K562 (cell line): ENCODE measurements at regions of chr15 and their contacts with region 1.

Region 1: DNA sequence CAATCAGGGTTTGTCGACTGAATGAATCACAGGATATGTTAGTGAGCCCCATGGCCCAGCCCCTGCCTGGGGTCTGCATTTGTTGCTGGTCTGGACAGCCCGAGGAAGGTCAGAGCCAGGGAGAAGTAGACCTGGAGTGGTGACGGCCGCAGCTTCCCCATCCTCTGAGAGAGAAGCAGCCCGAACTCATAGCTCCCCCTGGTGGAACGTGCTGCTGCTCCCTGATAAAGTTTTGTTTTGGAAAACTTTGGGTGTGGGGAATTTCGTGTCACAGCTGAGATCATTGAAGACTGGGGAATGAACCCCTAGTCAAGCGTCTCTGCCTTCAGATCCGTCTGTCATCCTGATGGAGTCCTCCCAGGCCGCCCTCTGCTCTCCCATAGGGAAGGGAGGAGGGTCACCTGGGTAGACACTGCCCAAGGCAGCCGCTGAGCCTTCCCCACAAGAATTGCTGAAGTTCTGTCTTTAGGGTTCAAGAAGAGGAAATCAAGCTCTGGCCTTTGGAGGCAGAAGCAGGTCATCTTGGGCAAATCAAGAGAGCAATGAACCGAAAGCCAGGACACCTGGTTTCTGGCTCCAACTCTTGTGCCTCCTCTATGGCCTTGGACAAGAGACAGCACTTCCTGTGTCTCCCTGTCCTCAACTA is 60.5 kb downstream of the GLDN start:
- DNase-seq: peak; percentile 54 to 68 (median 60)
- ATAC-seq: peak; percentile 84
- H3K4me3 ChIP-seq: no peak overlapping the region
- H3K27ac ChIP-seq: no peak overlapping the region
- H3K4me1 ChIP-seq: no peaks in the 10 kb centered on the region
- H3K27me3 ChIP-seq: peaks cover 39 to 40% of the 10 kb centered on the region in 2 experiments
- CTCF ChIP-seq: peak; percentile 73 to 87 (median 76)
- EP300 ChIP-seq: no peak
- POLR2A ChIP-seq: no peak
- RAD21 ChIP-seq: peak; percentile 47 to 70

Region 2: DNA sequence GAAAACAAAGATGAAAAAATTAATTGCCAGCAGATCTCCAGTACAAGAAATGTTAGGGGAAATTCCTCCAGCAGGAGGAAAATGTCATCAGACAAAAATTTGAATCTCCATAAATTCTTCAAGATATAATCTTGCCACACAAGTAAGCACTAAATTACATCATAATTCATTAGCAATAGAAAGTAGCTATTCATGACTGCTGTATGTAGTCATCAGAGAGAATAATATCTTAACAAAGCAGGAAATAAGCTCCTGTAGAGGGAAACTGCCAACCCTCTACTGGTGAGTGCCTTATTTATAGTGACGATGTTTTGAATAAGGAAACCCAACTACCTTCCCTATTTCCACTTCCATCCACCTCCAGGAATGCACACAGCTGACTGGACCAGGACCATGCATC is 1235.8 kb before region 1 on chr15:
- CTCF ChIA-PET with region 1: no interaction called
- POLR2A ChIA-PET with region 1: no interaction called
- in situ Hi-C with region 1: no loop called
- intact Hi-C with region 1: no loop called
- DNase-seq: no peak
- ATAC-seq: no peak
- H3K4me3 ChIP-seq: no peak overlapping the region
- H3K27ac ChIP-seq: no peak overlapping the region
- H3K4me1 ChIP-seq: peaks cover 0 to 4% of the 10 kb centered on the region in 2 experiments; a peak in 2 of 5 replicates
- H3K27me3 ChIP-seq: no peaks in the 10 kb centered on the region
- CTCF ChIP-seq: no peak
- EP300 ChIP-seq: no peak
- POLR2A ChIP-seq: no peak
- RAD21 ChIP-seq: no peak

Region 3: GRCh38 chr15:50697109-50697797 is 704.7 kb before region 1 on chr15:
- CTCF ChIA-PET with region 1: no interaction called
- POLR2A ChIA-PET with region 1: no interaction called
- in situ Hi-C with region 1: no loop called
- intact Hi-C with region 1: no loop called
- DNase-seq: no peak
- ATAC-seq: no peak
- H3K4me3 ChIP-seq: no peak overlapping the region
- H3K27ac ChIP-seq: no peak overlapping the region
- H3K4me1 ChIP-seq: no peaks in the 10 kb centered on the region
- H3K27me3 ChIP-seq: no peaks in the 10 kb centered on the region
- CTCF ChIP-seq: no peak
- EP300 ChIP-seq: no peak
- POLR2A ChIP-seq: no peak
- RAD21 ChIP-seq: no peak

Region 4: GRCh38 chr15:51227940-51228783 is 173.8 kb before region 1 on chr15:
- CTCF ChIA-PET with region 1: interaction called, 12 read pairs
- POLR2A ChIA-PET with region 1: no interaction called
- in situ Hi-C with region 1: no loop called
- intact Hi-C with region 1: no loop called
- DNase-seq: peak; percentile 74 to 88 (median 82)
- ATAC-seq: peak; percentile 95
- H3K4me3 ChIP-seq: no peak overlapping the region
- H3K27ac ChIP-seq: peak overlapping the region; percentile 82
- H3K4me1 ChIP-seq: peaks cover 11 to 31% of the 10 kb centered on the region in 2 experiments
- H3K27me3 ChIP-seq: peaks cover 0 to 3% of the 10 kb centered on the region in 2 experiments; a peak in 3 of 5 replicates
- CTCF ChIP-seq: no peak
- EP300 ChIP-seq: peak; percentile 67; the same call in 1 of the 2 replicates
- POLR2A ChIP-seq: no peak
- RAD21 ChIP-seq: no peak

Region 5: GRCh38 chr15:51281368-51281967 is 120.5 kb before region 1 on chr15:
- CTCF ChIA-PET with region 1: interaction called, 6 read pairs
- POLR2A ChIA-PET with region 1: no interaction called
- in situ Hi-C with region 1: no loop called
- intact Hi-C with region 1: loop called (anchors 2 kb)
- DNase-seq: peak; percentile 29 to 67 (median 48)
- ATAC-seq: peak; percentile 98
- H3K4me3 ChIP-seq: no peak overlapping the region
- H3K27ac ChIP-seq: no peak overlapping the region
- H3K4me1 ChIP-seq: no peaks in the 10 kb centered on the region
- H3K27me3 ChIP-seq: peaks cover 13 to 31% of the 10 kb centered on the region in 2 experiments
- CTCF ChIP-seq: peak; percentile 69 to 76 (median 73)
- EP300 ChIP-seq: no peak
- POLR2A ChIP-seq: no peak
- RAD21 ChIP-seq: peak; percentile 70 to 78

Region 6: GRCh38 chr15:51414257-51415044 is 12.5 kb after region 1 on chr15:
- CTCF ChIA-PET with region 1: no interaction called
- POLR2A ChIA-PET with region 1: no interaction called
- in situ Hi-C with region 1: no loop called
- intact Hi-C with region 1: no loop called
- DNase-seq: no peak
- ATAC-seq: no peak
- H3K4me3 ChIP-seq: no peak overlapping the region
- H3K27ac ChIP-seq: no peak overlapping the region
- H3K4me1 ChIP-seq: no peaks in the 10 kb centered on the region
- H3K27me3 ChIP-seq: peaks cover 6 to 8% of the 10 kb centered on the region in 2 experiments; a peak in 3 of 5 replicates
- CTCF ChIP-seq: no peak
- EP300 ChIP-seq: no peak
- POLR2A ChIP-seq: no peak
- RAD21 ChIP-seq: no peak

Region 7: DNA sequence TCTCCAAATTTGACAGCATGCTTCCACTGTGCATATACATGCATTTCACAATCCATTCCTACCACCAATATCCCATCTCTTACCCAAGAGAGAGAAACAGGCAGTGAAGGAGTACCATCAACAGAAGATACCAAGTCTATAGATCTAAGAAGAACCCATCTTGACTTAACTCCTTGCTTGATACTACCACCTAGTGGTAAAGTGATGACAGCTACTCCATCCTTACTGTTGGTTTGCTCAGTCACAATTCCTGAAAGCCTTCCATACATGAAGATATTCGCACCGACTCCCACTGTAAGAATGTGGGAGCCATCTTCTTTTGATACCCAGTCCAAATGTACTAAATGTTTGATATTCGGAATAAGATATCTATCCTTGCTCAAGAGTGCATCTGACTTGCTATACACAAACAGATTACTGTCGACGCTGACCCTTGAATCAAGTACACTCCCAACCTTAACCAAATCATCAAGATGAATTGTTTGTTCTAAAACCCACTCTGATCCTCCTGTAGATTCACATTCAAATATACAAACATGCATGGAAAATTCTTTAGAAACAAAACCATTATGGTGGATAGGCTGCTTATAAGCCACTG is 97.5 kb after region 1 on chr15:
- CTCF ChIA-PET with region 1: no interaction called
- POLR2A ChIA-PET with region 1: no interaction called
- in situ Hi-C with region 1: no loop called
- intact Hi-C with region 1: loop called (anchors 2 kb)
- DNase-seq: peak; percentile 22 to 45 (median 40)
- ATAC-seq: peak; percentile 89
- H3K4me3 ChIP-seq: no peak overlapping the region
- H3K27ac ChIP-seq: no peak overlapping the region
- H3K4me1 ChIP-seq: no peaks in the 10 kb centered on the region
- H3K27me3 ChIP-seq: no peaks in the 10 kb centered on the region
- CTCF ChIP-seq: peak; percentile 42 to 61 (median 59)
- EP300 ChIP-seq: no peak
- POLR2A ChIP-seq: no peak
- RAD21 ChIP-seq: peak in 1 of 2 experiments; percentile 49; a peak in 3 of 4 replicates